Calu3 (cell line): ENCODE measurements at regions of chr17 and their contacts with region 1.

Region 1: DNA sequence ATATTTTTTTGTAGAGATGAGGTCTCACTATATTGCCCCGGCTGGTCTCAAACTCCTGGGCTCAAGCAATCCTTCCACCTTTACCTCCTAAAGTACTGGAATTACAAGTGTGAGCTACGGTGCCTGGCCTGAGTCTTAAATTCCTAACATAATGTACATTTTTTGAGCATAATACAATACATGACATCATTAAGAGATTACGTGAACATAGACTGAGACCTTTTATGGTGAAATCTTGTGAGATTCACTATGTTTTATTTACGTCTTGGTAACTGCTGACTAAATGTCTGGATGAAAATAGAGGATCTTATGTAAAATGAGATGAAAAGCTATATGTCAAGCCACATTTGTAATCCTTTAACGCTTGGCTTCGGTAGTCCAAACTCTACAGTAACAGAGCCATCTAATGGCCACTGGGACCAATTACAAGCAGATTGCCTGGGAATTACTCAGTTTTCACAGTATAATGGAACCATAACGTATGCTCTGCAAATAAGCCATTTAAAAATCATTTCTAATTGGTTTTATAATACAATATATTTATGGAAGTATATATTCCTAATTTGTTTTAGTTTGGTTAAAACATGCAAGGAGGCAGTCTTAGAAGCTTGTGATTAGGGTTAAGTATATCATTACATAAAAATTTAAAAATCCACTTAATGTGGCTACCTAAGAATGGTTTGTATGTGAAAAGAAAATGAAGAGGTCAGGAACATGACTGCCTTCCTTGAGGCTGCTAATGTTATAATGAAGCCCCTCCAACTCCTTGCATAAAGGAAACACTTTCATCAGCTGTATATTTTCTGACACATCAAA is 8.1 kb upstream of the EFCAB13 start:
- DNase-seq: peak; percentile 56
- H3K4me3 Mint-ChIP-seq: no peak overlapping the region
- H3K27ac Mint-ChIP-seq: no peak overlapping the region
- H3K4me1 Mint-ChIP-seq: peaks cover 18% of the 10 kb centered on the region
- H3K27me3 Mint-ChIP-seq: no peaks in the 10 kb centered on the region
- CTCF ChIP-seq: peak; percentile 85

Region 2: DNA sequence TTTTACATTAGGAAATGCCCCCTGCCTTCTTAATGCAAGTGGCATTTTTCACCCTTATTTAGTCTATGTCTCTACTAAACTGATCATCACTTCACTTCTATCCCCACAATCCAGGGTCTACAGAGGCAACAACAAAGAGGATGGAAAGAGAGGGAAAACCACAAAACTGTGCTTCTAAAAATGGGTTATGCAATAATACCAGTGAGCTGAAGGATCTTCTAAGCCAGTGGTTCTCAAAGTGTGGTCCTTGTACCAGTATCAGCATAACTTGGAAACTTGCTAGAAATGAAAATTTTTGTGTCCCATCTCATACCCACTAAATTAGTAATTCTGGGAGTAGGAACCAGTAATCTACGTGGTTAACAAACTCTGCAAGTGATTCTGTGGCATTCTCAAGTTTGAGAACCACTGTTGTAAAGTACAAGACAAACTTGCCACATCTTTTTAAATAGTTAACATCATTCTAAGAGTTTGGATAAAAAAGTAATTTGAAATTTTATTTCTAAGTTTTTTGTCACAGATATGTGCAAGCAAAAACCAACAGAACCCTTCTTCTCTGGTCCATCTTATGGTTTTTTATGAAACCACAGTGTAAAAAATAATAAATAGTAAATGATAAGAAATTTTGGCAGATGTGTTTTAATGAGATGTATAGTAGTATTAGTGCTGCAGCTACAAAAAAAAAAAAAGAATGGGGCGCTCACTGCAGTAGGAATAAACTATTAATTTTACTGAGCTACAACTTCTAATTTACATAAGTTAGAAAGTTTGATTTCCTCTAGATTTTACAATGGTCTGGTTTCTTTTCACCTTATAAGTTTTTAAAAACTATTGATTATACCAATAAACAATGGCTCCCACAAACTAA is 142.7 kb before region 1 on chr17:
- CTCF ChIA-PET with region 1: no interaction called
- intact Hi-C with region 1: no loop called
- DNase-seq: no peak
- H3K4me3 Mint-ChIP-seq: no peak overlapping the region
- H3K27ac Mint-ChIP-seq: no peak overlapping the region
- H3K4me1 Mint-ChIP-seq: peaks cover 8% of the 10 kb centered on the region
- H3K27me3 Mint-ChIP-seq: no peaks in the 10 kb centered on the region
- CTCF ChIP-seq: no peak

Region 3: DNA sequence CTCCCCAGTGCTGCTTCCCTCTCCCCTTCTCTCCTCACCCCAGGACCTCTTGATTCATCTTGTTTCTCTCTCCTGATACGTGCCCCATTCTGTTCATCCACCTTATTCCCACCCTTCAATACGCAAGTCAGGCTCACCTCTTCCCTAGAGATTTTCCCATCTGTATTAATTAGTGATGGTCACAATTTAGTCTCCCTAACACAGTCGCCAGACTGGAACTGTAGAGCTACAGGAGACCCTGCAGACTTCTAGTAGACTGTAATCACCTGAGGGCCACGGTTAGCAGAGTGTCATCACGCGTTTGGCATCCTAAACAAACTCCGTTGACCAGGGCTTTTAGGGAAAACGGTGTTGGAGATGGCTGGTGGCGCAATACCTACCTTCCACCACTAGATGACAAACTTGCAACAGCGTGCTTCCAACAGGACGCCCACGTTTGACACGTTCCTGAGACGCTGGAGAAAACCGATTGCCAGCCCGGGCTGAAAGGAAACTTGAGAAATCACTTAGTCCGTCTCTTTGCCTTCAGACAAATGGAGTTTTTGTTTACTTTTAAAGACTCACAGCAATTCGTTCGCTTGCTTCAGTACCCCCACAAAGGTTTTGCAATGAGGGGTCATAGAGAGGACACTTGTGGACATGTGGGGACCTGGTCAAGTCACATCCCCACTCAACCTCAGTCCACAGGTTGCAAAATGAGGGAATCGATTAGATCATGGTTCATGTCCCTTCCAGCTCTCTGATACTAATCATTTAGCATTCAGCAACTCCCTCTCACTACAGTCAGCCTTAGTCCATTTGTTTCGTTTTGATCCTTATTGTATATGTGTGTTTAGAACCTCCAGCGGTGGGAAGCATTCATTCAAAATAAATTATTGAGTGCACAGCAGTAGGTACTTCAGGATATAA is 85.9 kb before region 1 on chr17:
- CTCF ChIA-PET with region 1: interaction called, 34 read pairs
- intact Hi-C with region 1: loop called (anchors 1 kb)
- DNase-seq: peak; percentile 91
- H3K4me3 Mint-ChIP-seq: peak overlapping the region; percentile 6
- H3K27ac Mint-ChIP-seq: peak overlapping the region; percentile 14
- H3K4me1 Mint-ChIP-seq: peaks cover 35% of the 10 kb centered on the region
- H3K27me3 Mint-ChIP-seq: no peaks in the 10 kb centered on the region
- CTCF ChIP-seq: peak; percentile 96

Region 4: DNA sequence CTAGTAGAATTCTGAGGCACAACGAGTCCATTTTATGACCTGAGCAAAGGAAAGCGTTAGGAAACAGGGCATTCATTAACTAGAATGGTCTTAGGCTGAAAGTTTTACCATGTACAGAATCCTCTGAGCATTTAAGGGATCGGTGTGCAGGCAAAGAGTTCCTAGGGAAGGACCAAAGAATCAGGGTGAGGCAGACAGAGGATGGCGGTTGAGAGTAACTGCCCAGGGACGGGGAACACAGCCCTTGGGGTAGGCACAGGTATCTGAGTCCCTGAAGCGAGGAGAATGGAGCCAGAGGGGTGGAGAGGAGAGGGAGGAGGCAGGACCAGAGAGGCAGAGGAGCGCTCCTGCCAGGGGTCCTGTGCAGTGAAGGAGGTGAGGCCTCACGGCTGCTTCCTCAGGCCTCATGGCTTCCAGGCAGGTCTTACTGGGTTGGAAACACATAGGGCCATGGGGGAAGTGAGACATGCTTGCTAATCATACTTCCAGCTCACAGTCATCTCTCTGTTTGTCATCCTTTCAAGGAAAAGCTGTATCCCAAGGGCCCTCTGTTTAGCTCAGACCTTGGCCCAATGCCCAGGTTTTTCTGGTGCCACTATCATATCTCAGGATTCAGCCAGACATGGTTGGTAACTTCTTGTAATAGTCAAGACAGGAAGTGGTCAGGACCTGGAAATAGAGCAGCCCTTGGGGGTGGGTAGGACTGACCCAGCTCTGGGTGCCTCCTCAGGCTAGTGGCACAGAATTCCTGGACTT is 75.9 kb before region 1 on chr17:
- CTCF ChIA-PET with region 1: interaction called, 17 read pairs
- intact Hi-C with region 1: no loop called
- DNase-seq: peak; percentile 89
- H3K4me3 Mint-ChIP-seq: no peak overlapping the region
- H3K27ac Mint-ChIP-seq: peak overlapping the region; percentile 65
- H3K4me1 Mint-ChIP-seq: peaks cover 21% of the 10 kb centered on the region
- H3K27me3 Mint-ChIP-seq: peaks cover 6% of the 10 kb centered on the region
- CTCF ChIP-seq: no peak

Region 5: DNA sequence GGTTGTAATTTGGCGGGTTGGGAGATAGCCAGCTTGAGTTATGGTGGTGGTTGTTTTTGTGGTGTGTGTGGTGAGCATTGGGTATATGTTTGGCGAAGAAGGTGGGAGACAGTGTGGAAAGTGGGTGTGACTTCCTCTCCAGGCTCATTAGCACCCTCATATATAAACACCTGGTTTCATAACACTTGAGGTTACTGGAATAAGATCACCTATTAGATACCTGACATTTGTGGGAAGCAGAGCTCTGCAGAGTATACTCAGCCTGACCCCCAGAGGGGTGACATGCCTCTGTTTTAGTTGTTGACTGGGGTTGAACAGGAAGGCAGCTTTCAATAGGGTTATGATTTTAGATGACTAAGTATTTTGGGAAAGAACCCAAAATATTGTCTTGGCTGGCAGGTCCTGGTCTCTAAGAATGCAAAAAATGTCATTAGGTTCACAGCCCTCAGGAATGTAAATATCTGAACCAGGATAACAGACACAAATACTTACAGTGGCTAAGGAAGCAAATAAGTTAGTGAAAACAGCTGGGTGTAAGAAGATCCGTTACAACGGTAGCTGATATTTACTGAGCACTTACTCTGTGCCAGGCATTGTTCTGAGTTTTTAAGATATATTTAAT is 10.2 kb before region 1 on chr17:
- CTCF ChIA-PET with region 1: interaction called, 15 read pairs
- intact Hi-C with region 1: no loop called
- DNase-seq: peak; percentile 80
- H3K4me3 Mint-ChIP-seq: no peak overlapping the region
- H3K27ac Mint-ChIP-seq: peak overlapping the region; percentile 34
- H3K4me1 Mint-ChIP-seq: peaks cover 52% of the 10 kb centered on the region
- H3K27me3 Mint-ChIP-seq: peaks cover 28% of the 10 kb centered on the region
- CTCF ChIP-seq: no peak

Region 6: DNA sequence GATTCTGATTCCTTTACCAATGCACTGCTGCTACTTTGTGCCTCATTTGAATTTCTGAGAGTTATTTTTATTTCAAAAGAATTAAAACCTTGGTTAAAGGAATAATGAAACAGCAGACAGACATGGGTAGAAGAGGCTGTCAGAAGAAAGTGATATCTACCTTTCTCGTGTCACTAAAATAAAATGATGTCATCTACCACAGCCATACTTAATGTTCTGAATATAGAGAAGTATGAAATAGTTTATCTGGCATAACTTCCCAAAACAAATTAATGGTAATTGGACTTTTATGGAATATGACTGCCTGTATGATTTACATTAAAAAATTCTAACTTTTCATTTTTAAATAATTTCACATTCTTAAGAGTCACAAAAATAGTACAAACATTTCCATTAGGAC is 60.6 kb after region 1 on chr17:
- CTCF ChIA-PET with region 1: no interaction called
- intact Hi-C with region 1: no loop called
- DNase-seq: no peak
- H3K4me3 Mint-ChIP-seq: no peak overlapping the region
- H3K27ac Mint-ChIP-seq: no peak overlapping the region
- H3K4me1 Mint-ChIP-seq: no peaks in the 10 kb centered on the region
- H3K27me3 Mint-ChIP-seq: no peaks in the 10 kb centered on the region
- CTCF ChIP-seq: no peak

Region 7: DNA sequence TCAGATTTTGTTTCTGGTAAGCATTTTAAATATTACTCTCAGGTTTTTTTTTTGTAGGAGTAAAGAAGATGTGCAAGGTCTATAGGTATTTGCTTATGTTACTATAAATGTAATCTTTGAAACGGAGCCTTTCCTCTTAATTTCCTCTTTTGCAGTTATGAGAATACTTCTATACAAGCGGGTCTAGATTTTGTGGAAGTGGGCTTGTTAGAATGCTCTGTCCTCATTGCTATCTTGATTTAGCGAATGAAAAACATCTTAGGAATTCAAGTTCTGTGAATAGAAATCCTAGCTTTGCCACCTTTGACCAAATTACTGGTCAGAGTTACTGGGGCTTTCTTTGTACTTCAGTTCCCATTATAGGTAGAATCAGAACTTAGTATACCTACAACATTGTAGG is 88.3 kb after region 1 on chr17:
- CTCF ChIA-PET with region 1: no interaction called
- intact Hi-C with region 1: no loop called
- DNase-seq: no peak
- H3K4me3 Mint-ChIP-seq: no peak overlapping the region
- H3K27ac Mint-ChIP-seq: no peak overlapping the region
- H3K4me1 Mint-ChIP-seq: peaks cover 8% of the 10 kb centered on the region
- H3K27me3 Mint-ChIP-seq: no peaks in the 10 kb centered on the region
- CTCF ChIP-seq: no peak